HCT116 (cell line): ENCODE measurements at regions of chr5 and their contacts with region 1.

Region 1: DNA sequence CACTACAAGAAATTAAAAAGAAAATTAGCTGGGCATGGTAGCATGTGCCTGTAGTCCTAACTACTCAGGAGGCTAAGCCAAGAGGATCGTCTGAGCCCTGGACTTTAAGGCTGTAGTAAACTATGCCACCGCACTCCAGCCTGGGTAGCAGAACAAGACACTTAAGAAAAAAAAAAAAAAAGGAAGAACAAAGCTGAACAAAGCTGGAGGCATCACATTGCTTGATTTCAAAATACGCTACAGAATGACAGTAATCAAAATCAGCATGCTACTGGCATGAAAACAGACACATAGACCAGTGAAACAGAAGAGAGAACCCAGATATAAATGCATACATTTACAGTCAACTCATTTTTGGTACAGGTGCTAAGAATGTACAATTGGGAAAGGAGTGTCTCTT is 14.5 kb upstream of the OTULIN start:
- DNase-seq: no peak
- ATAC-seq: no peak
- H3K4me3 ChIP-seq: no peak overlapping the region
- H3K27ac ChIP-seq: no peak overlapping the region
- H3K4me1 ChIP-seq: no peaks in the 10 kb centered on the region
- H3K27me3 ChIP-seq: peaks cover 7% of the 10 kb centered on the region; the same call in 1 of the 2 replicates
- CTCF ChIP-seq: no peak
- POLR2A ChIP-seq: no peak
- RAD21 ChIP-seq: no peak

Region 2: GRCh38 chr5:14351845-14352712 is 298.0 kb before region 1 on chr5:
- CTCF ChIA-PET with region 1: interaction called, 60 read pairs
- POLR2A ChIA-PET with region 1: no interaction called
- RAD21 ChIA-PET with region 1: interaction called, 5 to 7 read pairs
- intact Hi-C with region 1: loop called (anchors 2 kb)
- DNase-seq: peak; percentile 27
- ATAC-seq: peak; percentile 99
- H3K4me3 ChIP-seq: no peak overlapping the region
- H3K27ac ChIP-seq: no peak overlapping the region
- H3K4me1 ChIP-seq: no peaks in the 10 kb centered on the region
- H3K27me3 ChIP-seq: no peaks in the 10 kb centered on the region
- CTCF ChIP-seq: peak; percentile 38 to 98 (median 94); a peak in 5 of 6 replicates
- POLR2A ChIP-seq: no peak
- RAD21 ChIP-seq: peak; percentile 54

Region 3: GRCh38 chr5:14917719-14918118 is 267.7 kb after region 1 on chr5:
- CTCF ChIA-PET with region 1: no interaction called
- POLR2A ChIA-PET with region 1: no interaction called
- RAD21 ChIA-PET with region 1: no interaction called
- intact Hi-C with region 1: no loop called
- DNase-seq: no peak
- ATAC-seq: no peak
- H3K4me3 ChIP-seq: no peak overlapping the region
- H3K27ac ChIP-seq: no peak overlapping the region
- H3K4me1 ChIP-seq: no peaks in the 10 kb centered on the region
- H3K27me3 ChIP-seq: no peaks in the 10 kb centered on the region
- CTCF ChIP-seq: no peak
- POLR2A ChIP-seq: no peak
- RAD21 ChIP-seq: no peak